Heart left ventricle (tissue), 16 donors: ENCODE measurements at regions of chr11 and their contacts with region 1.

Region 1: DNA sequence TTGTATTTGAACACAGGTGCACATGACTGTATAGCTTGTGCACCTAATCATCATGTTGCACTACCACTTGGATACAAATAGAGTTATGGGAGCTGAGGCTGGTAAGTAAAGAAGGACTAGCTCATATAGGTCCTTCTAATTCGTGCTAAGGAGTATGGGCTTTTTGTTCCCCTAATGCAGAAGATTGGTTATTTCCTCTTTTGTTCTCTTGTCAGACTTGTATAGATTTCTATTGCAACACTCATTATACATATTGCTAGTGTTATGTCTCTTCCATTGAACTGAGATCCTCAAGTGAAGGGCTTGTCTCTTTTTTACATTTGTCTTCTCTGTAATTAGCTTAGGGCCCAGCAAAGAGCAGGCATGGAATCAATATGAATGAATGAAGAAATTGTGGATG is 54.1 kb upstream of the ARHGAP20 start:
- DNase-seq: no peak
- ATAC-seq: no peak
- H3K4me3 ChIP-seq: no peak overlapping the region
- H3K27ac ChIP-seq: no peak overlapping the region
- H3K4me1 ChIP-seq: peaks cover 0 to 13% (median 0%) of the 10 kb centered on the region in 12 donors
- H3K27me3 ChIP-seq: peaks cover 0 to 3% (median 0%) of the 10 kb centered on the region in 9 donors
- CTCF ChIP-seq: no peak
- POLR2A ChIP-seq: no peak

Region 2: DNA sequence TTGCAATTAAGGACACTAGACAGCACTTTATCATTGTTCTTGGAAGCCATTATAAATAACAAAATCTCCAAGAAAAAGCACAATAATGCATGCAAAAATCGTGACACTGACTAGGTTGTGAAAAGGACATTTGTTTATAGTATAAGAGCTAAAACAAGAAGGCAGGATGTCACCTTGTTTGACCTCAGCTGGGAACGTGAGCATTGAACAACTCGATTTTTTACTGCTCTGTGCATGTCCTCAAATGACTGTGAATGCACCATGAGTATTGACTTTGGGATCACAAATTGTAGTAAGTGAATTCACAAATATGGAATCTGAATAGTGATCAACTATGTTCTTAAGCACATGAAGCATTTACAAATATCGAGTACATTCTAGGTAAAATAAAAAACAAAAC is 18.8 kb before region 1 on chr11:
- intact Hi-C with region 1: loop called in 1 of 10 experiments (anchors 2 kb)
- DNase-seq: no peak
- ATAC-seq: no peak
- H3K4me3 ChIP-seq: no peak overlapping the region
- H3K27ac ChIP-seq: no peak overlapping the region
- H3K4me1 ChIP-seq: no peaks in the 10 kb centered on the region
- H3K27me3 ChIP-seq: no peaks in the 10 kb centered on the region
- CTCF ChIP-seq: no peak
- POLR2A ChIP-seq: no peak